ENCODE measurements at regions of chr3 and their contacts with region 1.

Region 1: DNA sequence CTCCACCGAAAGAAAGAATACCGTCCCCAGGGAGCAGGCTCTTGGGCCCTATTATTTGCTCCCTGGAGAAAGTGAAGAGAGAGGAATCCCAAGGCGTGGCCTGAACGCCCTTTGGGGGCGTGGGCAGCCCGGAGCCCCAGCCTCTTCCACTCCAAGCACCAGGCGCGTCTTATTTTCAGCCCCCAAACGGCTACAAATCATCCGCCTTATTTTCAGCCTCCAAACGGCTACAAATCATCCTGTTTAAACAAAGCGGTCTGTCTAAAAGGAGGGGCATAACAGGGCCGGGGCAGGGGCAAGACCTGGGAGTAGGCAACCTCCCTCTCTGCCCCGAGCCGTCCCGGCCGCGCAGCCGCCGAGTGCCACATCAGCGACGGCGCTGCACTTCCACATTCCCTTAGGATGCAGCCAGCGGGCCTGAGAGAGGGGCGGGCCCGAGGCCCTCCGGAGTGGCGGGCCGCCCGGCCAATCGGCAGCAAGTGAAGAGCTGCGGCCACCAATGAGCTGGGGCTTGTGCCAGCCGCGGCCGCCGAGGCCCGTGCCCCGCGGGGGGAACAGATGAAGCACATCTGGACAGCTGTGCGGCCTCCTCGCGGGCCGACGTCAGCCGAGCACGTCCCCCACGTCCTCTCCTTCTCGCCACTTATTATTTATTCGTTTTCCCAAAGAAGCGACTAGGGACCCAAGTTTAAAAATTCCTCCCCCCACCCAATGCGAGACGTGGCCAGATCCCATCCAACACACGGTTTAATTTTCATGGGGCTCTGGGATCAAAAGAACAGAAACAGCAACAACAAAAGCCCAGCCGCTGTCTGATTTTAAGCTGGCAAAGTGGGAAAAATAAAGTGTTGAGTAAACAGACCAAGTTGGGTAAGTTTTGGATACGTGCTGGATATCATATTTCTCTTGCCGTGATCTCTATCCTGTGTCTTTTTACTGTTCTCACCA is at the start of gene TMEM45A:
- DNase-seq: peak; percentile 97
- H3K4me3 ChIP-seq: peak within 1 kb of the TSS; percentile 51 to 64 (median 58)
- H3K27ac ChIP-seq: peak within 1 kb of the TSS; percentile 85 to 89 (median 88)
- H3K4me1 ChIP-seq: peaks cover 0 to 14% (median 7%) of the 10 kb centered on the region in 4 donors
- H3K27me3 ChIP-seq: no peaks in the 10 kb centered on the region
- CTCF ChIP-seq: no peak
- EP300 ChIP-seq: no peak
- POLR2A ChIP-seq: peak in 1 of 2 donors; percentile 23
- total RNA-seq, gene TMEM45A: 12.2 to 23.9 (median 15.7) TPM

Region 2: DNA sequence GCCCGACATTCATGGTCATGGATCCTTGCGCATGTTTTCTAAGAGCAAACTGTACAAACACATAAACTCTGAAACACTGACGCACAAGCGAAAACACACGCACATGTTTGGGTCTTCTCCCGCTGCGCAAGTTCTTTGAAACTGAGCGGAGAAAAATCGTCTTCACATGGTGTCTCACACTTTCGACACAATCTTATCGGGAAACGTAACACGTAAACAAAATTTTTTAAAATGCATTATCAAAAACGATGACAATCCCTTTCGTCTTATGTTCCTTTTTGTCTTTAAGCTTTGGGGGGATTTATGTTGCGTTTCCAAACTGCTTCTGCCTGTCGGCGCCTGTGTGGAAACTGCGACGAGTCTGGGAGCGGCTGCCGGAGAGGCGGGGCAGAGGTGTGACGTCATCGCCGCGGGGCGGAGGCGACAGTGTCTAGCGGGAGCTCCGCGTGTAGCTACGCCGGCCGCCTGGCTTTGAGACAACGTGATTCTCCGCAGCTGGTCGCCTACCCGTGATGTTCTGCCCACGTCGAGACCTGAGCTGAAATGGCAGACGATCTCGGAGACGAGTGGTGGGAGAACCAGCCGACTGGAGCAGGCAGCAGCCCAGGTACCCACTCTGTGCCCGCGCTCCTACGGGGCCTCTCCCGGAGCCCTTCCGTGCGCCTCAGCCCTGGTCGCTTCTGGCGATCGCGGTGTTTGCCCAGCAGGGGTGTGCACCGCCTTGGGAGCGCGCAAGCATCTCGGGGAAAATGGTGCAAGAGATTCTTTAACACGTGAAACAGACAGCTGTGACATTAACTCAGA is 674.7 kb before region 1 on chr3 and contains the start of gene CMSS1:
- intact Hi-C with region 1: loop called (anchors 10 kb)
- DNase-seq: peak; percentile 97
- H3K4me3 ChIP-seq: peak within 1 kb of the TSS; percentile 55 to 78 (median 64)
- H3K27ac ChIP-seq: peak within 1 kb of the TSS; percentile 83 to 94 (median 91)
- H3K4me1 ChIP-seq: peaks cover 0 to 22% (median 17%) of the 10 kb centered on the region in 4 donors
- H3K27me3 ChIP-seq: no peaks in the 10 kb centered on the region
- CTCF ChIP-seq: peak in 2 of 4 experiments; percentile 25 to 51
- EP300 ChIP-seq: peak in 1 of 4 donors; percentile 43
- POLR2A ChIP-seq: peak; percentile 35 to 42
- total RNA-seq, gene CMSS1: 11.1 to 19.4 (median 16.6) TPM

Region 3: DNA sequence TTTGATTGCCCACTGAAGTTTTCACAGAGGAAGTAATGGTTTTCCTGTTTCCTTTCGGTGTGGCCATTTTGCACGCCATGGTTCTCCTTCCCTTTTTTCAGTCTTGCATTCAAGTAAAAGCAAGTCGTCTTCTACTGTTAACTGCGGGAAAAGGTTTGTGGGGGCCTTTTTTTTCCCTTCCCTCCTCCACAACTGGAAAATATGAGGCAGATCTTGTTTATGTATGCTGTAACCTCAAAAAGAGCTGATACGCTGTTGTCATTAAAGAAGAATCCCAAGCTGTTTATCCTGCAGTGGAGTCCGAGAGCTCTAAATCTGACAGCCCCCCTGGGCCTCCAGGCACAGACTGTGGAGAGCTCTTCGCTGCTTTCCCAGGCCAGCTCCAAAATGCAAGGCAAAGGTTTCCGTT is 418.4 kb before region 1 on chr3:
- intact Hi-C with region 1: no loop called
- DNase-seq: peak; percentile 64
- H3K4me3 ChIP-seq: peak overlapping the region in 1 of 4 donors; percentile 5
- H3K27ac ChIP-seq: peak overlapping the region; percentile 49 to 76 (median 66)
- H3K4me1 ChIP-seq: peaks cover 0 to 43% (median 35%) of the 10 kb centered on the region in 4 donors
- H3K27me3 ChIP-seq: no peaks in the 10 kb centered on the region
- CTCF ChIP-seq: no peak
- EP300 ChIP-seq: no peak
- POLR2A ChIP-seq: no peak

Region 4: DNA sequence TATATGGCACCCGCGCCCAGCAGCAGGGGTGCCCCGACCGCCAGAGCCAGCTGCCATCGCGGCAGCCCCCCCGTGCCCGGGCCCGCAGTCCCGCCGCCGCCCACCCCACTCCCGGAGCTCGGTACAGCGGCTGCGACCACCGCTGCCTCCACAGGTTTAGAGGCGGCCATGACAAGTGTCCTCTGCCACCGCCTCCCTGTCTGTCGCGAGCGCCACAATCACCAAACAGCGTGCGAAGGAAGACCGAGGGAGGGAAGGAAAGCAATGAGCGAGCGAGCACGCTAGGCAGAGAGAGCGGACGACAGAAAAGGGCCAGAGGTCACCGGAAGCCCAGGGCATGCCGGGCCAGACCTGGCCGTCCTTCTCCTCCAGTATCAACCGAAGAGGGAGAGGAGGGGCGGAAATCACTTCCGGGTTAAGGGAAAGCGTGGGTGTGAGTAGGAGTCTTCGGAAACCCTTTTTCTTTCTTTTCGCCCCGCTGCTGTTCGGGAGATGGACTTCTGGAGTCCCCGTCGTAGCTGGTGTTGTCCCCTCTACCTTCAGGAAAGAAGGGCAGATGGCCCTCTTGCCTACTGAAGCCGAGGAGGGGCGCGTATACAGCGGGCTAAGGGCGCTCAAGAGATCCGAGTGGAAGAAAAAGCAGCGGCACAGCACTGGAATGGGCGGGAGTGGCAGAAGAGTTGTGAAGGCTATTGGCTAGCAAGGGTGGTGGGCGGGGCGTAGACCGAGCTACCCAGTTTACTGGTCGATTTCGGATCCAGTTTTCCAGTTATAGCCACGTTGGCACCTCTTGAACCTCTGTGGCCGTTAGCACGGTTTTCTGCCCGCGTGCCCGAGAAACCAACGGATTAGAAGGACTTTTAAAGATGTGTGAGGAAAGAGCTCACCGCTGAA is 91.3 kb before region 1 on chr3 and contains the starts of genes LNP1 and TOMM70:
- intact Hi-C with region 1: loop called (anchors 2 kb)
- DNase-seq: peak; percentile 98
- H3K4me3 ChIP-seq: peak within 1 kb of the TSS; percentile 77 to 99 (median 87)
- H3K27ac ChIP-seq: peak within 1 kb of the TSS; percentile 89 to 98 (median 91)
- H3K4me1 ChIP-seq: peaks cover 0 to 63% (median 38%) of the 10 kb centered on the region in 4 donors
- H3K27me3 ChIP-seq: no peaks in the 10 kb centered on the region
- CTCF ChIP-seq: no peak
- EP300 ChIP-seq: no peak
- POLR2A ChIP-seq: peak; percentile 69 to 72
- total RNA-seq, gene LNP1: 2.2 to 3.6 (median 3.1) TPM
- total RNA-seq, gene TOMM70: 49.6 to 54.9 (median 51.9) TPM

Region 5: GRCh38 chr3:100561459-100562158 is 69.3 kb after region 1 on chr3:
- intact Hi-C with region 1: no loop called
- DNase-seq: no peak
- H3K4me3 ChIP-seq: no peak overlapping the region
- H3K27ac ChIP-seq: no peak overlapping the region
- H3K4me1 ChIP-seq: no peaks in the 10 kb centered on the region
- H3K27me3 ChIP-seq: no peaks in the 10 kb centered on the region
- CTCF ChIP-seq: no peak
- EP300 ChIP-seq: no peak
- POLR2A ChIP-seq: no peak

Region 6: GRCh38 chr3:100577382-100578002 is 85.2 kb after region 1 on chr3:
- intact Hi-C with region 1: no loop called
- DNase-seq: no peak
- H3K4me3 ChIP-seq: no peak overlapping the region
- H3K27ac ChIP-seq: no peak overlapping the region
- H3K4me1 ChIP-seq: no peaks in the 10 kb centered on the region
- H3K27me3 ChIP-seq: no peaks in the 10 kb centered on the region
- CTCF ChIP-seq: no peak
- EP300 ChIP-seq: no peak
- POLR2A ChIP-seq: no peak

Region 7: GRCh38 chr3:101685870-101686412 is 1193.6 kb after region 1 on chr3:
- intact Hi-C with region 1: loop called (anchors 10 kb)
- DNase-seq: no peak
- H3K4me3 ChIP-seq: peak overlapping the region; percentile 58 to 77 (median 64)
- H3K27ac ChIP-seq: peak overlapping the region; percentile 92 to 96 (median 94)
- H3K4me1 ChIP-seq: peaks cover 0 to 39% (median 33%) of the 10 kb centered on the region in 4 donors
- H3K27me3 ChIP-seq: no peaks in the 10 kb centered on the region
- CTCF ChIP-seq: no peak
- EP300 ChIP-seq: no peak
- POLR2A ChIP-seq: no peak

Measured in sigmoid colon (tissue), 7 donors.